Psoas muscle (tissue), 8 donors: ENCODE measurements at regions of chr6 and their contacts with region 1.

Region 1: GRCh38 chr6:3045369-3045768 is 22.9 kb upstream of the RIPK1 start:
- DNase-seq: no peak
- ATAC-seq: no peak
- H3K4me3 ChIP-seq: no peak overlapping the region
- H3K27ac ChIP-seq: no peak overlapping the region
- H3K4me1 ChIP-seq: peaks cover 8% of the 10 kb centered on the region
- H3K27me3 ChIP-seq: no peaks in the 10 kb centered on the region
- CTCF ChIP-seq: no peak

Region 2: DNA sequence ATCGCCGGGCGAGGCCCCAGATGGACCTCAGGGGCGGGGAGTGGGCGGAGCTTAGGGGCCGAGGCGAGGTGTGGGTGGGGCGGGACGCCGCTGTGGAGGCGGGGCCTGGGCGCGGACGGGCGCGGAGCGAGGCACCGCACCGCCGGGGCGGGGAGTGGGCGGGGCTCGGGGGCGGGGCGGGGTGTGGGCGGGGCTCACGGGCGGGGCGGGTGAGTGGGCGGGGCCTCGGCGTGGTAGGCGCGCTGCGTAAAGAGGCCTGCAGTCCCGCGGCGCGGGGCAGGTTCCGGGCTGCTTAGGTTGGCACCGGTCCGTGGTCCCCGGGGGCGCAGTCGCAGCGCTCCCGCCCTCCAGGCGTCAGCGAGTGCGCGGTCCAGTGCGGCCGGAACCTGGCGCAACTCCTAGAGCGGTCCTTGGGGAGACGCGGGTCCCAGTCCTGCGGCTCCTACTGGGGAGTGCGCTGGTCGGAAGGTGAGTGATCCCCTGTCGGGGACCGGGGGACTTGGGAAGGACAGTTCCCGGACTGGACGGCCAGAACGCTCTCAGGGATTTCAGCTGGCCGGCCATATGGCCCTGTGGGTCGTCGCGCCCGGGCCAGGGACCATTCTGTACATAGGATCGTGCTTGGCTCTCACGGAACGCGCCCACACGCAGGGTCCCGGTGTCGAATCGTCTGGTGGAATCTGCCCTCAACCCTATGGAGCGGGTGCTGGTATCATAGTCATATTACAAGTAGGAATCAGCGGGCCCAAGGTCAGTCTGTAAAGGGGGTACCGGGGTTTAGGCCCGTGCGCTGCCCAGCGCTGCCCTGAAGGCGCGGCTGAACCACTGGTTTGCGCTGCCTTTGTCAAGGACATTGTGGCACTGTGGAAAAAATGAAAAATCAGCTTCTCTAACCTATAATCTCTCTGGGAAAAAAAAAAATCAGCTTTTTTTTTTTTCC is 45.5 kb before region 1 on chr6 and contains the start of gene NQO2:
- intact Hi-C with region 1: no loop called
- DNase-seq: peak; percentile 93 to 96
- ATAC-seq: peak; percentile 84 to 87 (median 84)
- H3K4me3 ChIP-seq: peak within 1 kb of the TSS; percentile 95
- H3K27ac ChIP-seq: peak within 1 kb of the TSS; percentile 99
- H3K4me1 ChIP-seq: peaks cover 20% of the 10 kb centered on the region
- H3K27me3 ChIP-seq: no peaks in the 10 kb centered on the region
- CTCF ChIP-seq: no peak
- total RNA-seq, gene NQO2: 42.8 to 129 (median 101) TPM

Region 3: DNA sequence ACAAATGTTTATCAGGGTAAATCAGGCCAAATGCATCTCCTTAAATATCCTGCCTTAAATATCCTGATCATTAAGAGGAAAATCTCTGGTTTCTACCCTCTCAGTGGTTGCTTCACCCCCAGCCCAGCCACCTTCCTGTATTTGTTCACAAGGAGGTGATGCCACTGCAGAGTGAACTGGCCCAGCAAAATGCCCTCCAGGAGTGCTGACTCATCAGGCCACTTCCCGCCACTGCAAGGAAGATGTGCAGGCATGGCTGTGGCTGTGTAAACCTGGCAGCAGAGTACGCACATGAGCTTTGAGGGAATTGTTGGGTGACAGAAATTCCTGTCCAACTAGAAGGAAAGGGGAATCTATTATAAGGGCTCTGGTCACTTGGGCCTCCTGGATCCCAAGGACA is 31.9 kb before region 1 on chr6:
- intact Hi-C with region 1: loop called in 1 of 2 experiments (anchors 5 kb)
- DNase-seq: peak in 1 of 2 donors; percentile 40
- ATAC-seq: peak; percentile 52 to 74 (median 66)
- H3K4me3 ChIP-seq: no peak overlapping the region
- H3K27ac ChIP-seq: no peak overlapping the region
- H3K4me1 ChIP-seq: no peaks in the 10 kb centered on the region
- H3K27me3 ChIP-seq: no peaks in the 10 kb centered on the region
- CTCF ChIP-seq: no peak